Activated CD4-positive, alpha-beta T cell treated with anti-CD3 and anti-CD28 coated beads, Interleukin-2, amount 10 ng/mL, durations not matched to agents 24 days and 14 days (primary cell): ENCODE measurements at regions of chr10 and their contacts with region 1.

Region 1: GRCh38 chr10:103481974-103482531 is 3.0 kb upstream of the CALHM3 start:
- DNase-seq: peak; percentile 86
- H3K4me3 Mint-ChIP-seq: no peak overlapping the region
- H3K27ac Mint-ChIP-seq: no peak overlapping the region
- H3K4me1 Mint-ChIP-seq: peaks cover 11% of the 10 kb centered on the region
- H3K27me3 Mint-ChIP-seq: no peaks in the 10 kb centered on the region

Region 2: DNA sequence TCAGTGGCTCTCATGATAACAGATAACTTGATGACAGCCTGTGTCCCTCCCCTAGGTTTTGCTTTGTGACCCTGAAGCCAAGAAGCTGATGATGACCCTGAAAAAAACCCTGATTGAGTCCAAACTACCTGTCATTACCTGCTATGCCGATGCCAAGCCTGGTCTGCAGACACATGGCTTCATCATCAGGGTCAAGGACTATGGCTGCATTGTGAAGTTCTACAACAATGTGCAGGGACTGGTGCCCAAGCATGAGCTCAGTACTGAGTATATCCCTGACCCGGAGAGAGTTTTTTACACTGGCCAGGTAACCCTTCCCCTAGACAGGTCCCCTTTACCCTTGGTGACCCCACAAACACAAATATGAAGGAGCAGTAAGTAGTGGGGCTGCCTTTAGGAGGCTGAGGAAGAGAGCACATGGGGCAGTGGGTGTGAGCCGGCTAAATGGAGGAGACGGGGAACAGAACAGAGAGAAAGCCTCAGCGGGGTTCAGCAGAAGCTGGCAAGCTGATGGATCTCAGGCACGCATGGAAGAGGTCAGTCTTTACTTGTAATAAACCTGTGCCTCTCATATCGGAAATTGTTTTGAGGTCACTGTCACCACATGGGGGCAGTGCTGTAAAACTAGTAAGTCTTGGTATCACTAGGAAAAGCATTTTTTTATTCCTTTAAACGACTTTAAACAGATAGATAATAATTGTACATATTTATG is 65.5 kb before region 1 on chr10:
- intact Hi-C with region 1: loop called (anchors 1 kb)
- DNase-seq: peak; percentile 90
- H3K4me3 Mint-ChIP-seq: no peak overlapping the region
- H3K27ac Mint-ChIP-seq: peak overlapping the region; percentile 26
- H3K4me1 Mint-ChIP-seq: no peaks in the 10 kb centered on the region
- H3K27me3 Mint-ChIP-seq: no peaks in the 10 kb centered on the region

Region 3: GRCh38 chr10:103451831-103452505 is 30.1 kb before region 1 on chr10 and contains the start of gene CALHM2:
- intact Hi-C with region 1: loop called (anchors 1 kb)
- DNase-seq: peak; percentile 90
- H3K4me3 Mint-ChIP-seq: peak within 1 kb of the TSS; percentile 95
- H3K27ac Mint-ChIP-seq: peak within 1 kb of the TSS; percentile 85
- H3K4me1 Mint-ChIP-seq: peaks cover 54% of the 10 kb centered on the region
- H3K27me3 Mint-ChIP-seq: no peaks in the 10 kb centered on the region
- total RNA-seq, gene CALHM2: 14.0 and 17.5 TPM in 2 replicates